ENCODE measurements at regions of chr15 and their contacts with region 1.

Region 1: GRCh38 chr15:33001926-33002325 is 192.6 kb downstream of the FMN1 start:
- DNase-seq: no peak
- H3K4me3 ChIP-seq: no peak overlapping the region
- H3K27me3 ChIP-seq: no peaks in the 10 kb centered on the region
- CTCF ChIP-seq: no peak

Region 2: DNA sequence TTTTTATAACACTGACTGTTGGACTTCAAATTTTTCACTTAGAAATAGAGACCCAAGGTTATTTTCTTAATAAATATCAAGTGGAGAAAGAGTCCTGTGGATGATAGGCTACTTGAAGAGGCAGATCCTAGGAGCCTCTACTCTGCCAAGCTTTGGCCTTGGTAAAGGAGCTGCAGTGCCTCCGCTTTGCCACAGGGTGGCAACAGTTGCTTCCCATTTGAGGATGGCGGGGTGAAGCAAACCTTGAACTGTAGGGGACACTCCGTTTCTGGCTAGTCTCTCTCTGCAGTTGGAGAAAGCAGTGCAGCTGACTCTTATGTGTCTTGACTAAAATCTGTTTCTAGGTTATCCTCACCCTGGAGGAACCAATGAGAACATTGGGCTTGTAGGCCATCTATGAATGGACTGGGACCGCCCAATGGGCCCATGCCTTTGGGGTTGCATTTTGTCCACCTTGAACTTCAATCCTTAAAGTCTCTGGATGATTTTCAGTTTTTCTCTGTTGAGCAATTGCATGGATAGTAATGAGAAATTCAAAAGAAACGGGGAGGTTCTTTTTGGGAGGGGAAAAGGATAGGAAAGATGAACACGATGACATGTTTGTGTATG is 350.6 kb before region 1 on chr15:
- CTCF ChIA-PET with region 1: interaction called, 165 read pairs
- POLR2A ChIA-PET with region 1: no interaction called
- DNase-seq: no peak
- H3K4me3 ChIP-seq: no peak overlapping the region
- H3K27me3 ChIP-seq: no peaks in the 10 kb centered on the region; the same call in 1 of the 2 replicates
- CTCF ChIP-seq: peak; percentile 98

Region 3: DNA sequence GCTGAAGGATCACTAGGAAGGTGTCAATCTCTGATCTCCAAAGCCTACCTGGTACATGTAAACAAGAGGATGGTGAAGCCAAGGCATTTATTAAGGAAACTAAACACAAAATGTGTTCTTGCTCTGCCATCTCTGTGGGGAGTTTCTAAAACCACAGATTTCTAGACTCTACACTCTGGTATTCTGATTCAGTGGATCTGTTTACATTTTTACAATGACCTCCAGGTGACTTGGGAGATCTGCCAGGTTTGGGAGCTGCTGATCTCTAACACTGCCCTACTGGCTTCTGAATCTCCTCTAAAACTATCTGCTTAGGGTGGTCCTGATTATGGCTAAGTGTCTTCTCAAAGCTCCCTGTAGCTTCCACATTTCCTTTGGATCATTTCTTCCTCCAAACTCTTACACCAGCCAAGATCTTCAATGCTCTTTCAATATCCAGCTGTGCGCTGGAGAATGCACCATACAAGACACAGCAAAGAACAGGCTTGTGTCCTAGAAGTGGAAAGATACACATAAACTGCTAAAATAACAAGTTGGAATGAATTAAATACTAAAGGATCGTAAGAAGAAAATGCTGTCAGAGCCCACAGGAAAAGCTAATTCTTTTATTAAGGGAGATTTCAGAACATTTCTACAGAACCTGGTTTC is 211.4 kb before region 1 on chr15:
- CTCF ChIA-PET with region 1: no interaction called
- POLR2A ChIA-PET with region 1: no interaction called
- DNase-seq: peak; percentile 18
- H3K4me3 ChIP-seq: no peak overlapping the region
- H3K27me3 ChIP-seq: no peaks in the 10 kb centered on the region
- CTCF ChIP-seq: no peak

Region 4: GRCh38 chr15:32933236-32933635 is 68.7 kb before region 1 on chr15:
- CTCF ChIA-PET with region 1: no interaction called
- POLR2A ChIA-PET with region 1: no interaction called
- DNase-seq: no peak
- H3K4me3 ChIP-seq: no peak overlapping the region
- H3K27me3 ChIP-seq: no peaks in the 10 kb centered on the region
- CTCF ChIP-seq: no peak

Measured in BJ (cell line).